Tibial artery (tissue), 4 donors: ENCODE measurements at regions of chr10 and their contacts with region 1.

Region 1: DNA sequence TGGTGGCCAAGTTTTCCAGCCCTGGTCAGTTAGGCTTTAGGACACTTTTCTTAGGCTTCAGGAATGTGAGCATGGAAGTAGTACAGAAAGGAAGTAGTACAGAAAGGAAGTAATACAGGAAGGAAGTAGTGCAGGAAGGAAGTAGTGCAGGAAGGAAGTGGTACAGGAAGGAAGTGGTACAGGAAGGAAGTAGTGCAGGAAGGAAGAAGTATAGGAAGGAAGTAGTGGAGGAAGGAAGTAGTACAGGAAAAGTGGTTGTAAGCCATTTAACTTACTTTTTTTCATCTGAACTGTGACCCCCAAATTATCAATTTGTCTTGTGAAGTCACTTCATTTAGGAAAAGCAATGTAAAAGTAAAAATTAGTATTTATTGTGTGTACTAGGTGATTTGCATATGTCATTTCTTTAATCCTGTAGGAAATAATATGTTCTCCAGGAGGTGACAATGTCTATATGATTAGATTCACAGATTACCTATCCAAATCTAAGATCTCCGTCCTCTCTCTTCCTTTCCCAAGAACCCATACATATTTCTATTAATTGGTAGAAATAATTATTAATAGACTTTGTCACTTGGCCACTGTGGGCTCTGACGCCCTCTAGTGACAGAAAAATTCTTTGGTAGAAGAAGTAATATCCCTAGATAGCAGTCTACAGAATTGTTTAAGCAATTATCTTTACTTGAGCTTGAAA is 3.9 kb upstream of the FAS start:
- DNase-seq: no peak
- H3K4me3 ChIP-seq: no peak overlapping the region
- H3K27ac ChIP-seq: peak overlapping the region; percentile 82 to 92
- H3K4me1 ChIP-seq: peaks cover 0 to 82% (median 38%) of the 10 kb centered on the region in 4 donors
- H3K27me3 ChIP-seq: no peaks in the 10 kb centered on the region
- CTCF ChIP-seq: peak; percentile 71 to 75

Region 2: DNA sequence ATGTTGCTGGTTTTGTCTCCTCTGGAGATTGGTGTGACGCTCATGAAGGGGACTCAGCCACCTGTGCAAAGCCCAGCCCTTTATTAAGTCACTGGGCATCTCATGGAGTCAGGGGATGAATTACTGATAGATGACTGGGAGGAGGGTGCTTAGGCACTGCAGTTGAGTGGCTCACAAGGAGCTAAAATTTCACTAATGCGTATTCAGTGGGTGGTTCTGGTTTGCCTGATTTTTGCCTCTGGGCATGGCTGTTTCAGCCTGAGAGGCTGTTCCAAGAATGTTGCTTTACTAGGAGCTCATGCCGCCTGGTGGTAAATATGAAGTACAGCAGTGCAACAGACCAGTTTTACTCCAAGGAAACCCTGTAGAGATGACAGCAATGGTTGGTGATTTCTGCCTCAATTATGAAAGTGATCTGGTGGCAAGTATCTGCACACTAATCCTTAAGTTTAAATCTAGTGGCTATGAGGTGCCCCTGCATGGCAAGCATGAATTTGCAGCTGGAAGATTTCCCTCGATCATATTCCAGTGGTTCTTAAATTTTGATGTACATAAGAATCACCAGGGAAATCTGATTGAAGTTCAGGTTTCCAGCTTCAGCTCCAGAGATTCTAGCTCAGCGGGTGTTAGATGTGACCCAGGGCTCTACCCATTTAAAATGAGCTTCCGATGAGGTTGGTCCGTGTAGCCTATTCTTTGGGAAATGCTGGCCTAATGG is 54.0 kb before region 1 on chr10:
- intact Hi-C with region 1: loop called (anchors 5 kb)
- DNase-seq: peak; percentile 70 to 85
- H3K4me3 ChIP-seq: no peak overlapping the region
- H3K27ac ChIP-seq: peak overlapping the region; percentile 67 to 76
- H3K4me1 ChIP-seq: peaks cover 0 to 20% (median 9%) of the 10 kb centered on the region in 4 donors
- H3K27me3 ChIP-seq: no peaks in the 10 kb centered on the region
- CTCF ChIP-seq: peak; percentile 89 to 95

Region 3: DNA sequence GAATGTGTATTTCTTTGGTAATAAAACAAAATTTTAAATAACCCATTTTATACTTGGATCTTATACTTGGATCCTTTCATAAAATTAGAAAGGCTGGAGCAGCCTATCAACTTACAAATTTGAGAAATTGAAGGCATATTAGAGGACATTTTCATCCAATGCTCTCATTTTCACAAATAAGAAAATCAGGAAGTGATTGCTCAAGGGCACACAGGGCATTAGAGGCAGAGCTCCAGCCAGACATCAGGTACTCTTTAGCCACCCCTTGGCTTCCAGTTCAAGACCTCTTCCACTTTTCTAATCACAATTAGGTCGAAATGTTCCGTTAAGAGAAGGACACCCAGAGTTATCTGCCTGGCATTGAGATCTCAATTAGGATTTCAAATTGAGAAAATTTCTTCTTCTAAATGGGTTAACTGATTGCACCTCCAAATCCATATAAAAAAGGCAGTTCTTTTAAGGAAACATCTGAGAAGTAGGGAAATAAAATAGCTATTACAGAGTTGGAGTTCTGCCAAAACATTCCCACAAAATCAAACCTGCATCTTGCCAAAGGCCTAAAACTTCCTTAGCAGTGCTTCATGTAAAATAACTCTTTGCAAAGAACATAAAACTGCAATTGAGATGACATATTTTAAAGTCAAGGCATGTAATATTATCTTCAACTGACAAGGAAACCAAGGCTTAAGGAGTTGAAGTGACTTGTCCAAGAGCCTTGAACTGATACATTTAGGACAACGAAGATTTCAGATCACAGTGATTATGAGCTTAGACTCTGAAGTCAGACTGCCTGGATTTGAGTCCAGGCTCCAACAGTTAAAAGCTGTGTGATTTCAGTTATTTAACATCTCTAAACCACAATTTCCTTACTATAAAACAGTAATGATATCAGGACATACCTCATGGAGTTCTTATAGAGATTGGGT is 36.5 kb before region 1 on chr10:
- intact Hi-C with region 1: loop called (anchors 2 kb)
- DNase-seq: no peak
- H3K4me3 ChIP-seq: peak overlapping the region; percentile 68 to 72
- H3K27ac ChIP-seq: peak overlapping the region; percentile 88 to 89
- H3K4me1 ChIP-seq: peaks cover 0 to 42% (median 22%) of the 10 kb centered on the region in 4 donors
- H3K27me3 ChIP-seq: no peaks in the 10 kb centered on the region
- CTCF ChIP-seq: no peak

Region 4: DNA sequence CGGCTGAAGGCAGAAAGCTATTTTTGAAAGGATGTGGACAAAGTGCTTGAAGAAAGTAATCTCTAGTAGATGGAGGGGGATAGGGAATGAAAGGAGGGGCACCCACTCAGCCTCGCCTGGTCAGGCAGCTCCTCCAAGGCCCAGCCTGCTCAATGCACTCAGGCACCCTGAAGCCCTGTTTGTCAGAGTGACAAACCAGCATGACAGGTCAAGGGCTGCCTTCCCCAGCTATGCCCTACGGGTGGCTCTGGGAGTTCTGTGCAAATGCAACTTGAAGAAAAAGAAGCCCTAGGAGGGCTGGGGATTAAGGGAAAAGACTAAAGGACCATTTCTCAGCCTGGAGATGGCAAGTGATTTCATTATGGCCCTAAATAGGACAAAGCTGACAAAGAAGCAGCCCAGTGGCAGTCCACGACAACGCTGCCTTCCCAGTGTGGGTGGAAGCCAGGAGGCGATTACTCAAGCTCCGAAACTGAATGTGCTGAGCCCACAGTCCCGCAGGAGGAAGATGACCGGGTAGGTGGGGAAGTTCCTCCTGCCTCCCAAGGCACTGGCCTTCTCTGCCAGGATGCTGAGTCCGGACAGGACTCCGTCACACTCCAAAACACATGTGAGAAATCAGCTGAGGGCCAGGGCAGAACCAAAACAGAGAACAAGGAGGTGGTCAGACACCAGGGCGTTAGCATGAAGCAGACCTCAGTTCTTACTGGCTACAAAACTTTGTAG is 248.5 kb after region 1 on chr10:
- intact Hi-C with region 1: no loop called
- DNase-seq: peak; percentile 68 to 83
- H3K4me3 ChIP-seq: no peak overlapping the region
- H3K27ac ChIP-seq: no peak overlapping the region
- H3K4me1 ChIP-seq: no peaks in the 10 kb centered on the region
- H3K27me3 ChIP-seq: no peaks in the 10 kb centered on the region
- CTCF ChIP-seq: no peak